ENCODE measurements at regions of chr6 and their contacts with region 1.

Region 1: GRCh38 chr6:13487122-13488014 is at the start of gene GFOD1:
- DNase-seq: peak; percentile 70 to 98 (median 86)

Region 2: GRCh38 chr6:13146442-13146841 is 340.9 kb before region 1 on chr6:
- intact Hi-C with region 1: no loop called
- DNase-seq: no peak

Region 3: DNA sequence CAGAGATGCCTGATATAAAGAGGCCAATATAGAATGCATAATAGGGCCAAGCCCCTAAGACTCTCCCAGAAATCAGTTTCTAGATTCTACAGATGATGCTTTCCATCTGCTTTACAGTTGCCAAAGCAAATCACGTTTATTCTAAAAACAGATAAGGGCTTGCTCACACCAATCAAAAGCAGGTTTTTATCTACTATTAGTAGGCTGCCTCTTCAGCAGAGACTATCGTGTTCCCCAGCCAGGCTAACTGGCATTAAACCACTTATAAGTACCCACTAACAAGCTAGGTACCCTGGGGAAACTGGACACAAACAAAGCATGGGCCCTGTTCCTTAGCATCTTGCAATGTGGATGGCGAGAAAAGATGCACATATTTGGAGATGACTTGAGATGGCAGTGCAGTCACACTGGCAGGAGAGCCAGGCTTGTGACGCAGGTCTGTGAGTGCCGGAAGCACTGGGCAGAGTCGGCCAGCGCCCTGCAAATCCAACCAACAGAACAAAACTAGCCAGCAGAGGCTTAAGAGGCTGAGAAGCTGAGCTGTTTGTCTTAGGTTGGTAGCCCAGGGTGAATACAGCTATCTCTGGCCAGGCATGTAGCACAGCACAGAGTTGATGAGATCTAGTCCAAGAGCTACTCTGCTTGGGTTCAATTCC is 73.3 kb before region 1 on chr6:
- intact Hi-C with region 1: loop called (anchors 5 kb)
- DNase-seq: peak in 9 of 10 donors; percentile 53 to 96 (median 84)

Region 4: DNA sequence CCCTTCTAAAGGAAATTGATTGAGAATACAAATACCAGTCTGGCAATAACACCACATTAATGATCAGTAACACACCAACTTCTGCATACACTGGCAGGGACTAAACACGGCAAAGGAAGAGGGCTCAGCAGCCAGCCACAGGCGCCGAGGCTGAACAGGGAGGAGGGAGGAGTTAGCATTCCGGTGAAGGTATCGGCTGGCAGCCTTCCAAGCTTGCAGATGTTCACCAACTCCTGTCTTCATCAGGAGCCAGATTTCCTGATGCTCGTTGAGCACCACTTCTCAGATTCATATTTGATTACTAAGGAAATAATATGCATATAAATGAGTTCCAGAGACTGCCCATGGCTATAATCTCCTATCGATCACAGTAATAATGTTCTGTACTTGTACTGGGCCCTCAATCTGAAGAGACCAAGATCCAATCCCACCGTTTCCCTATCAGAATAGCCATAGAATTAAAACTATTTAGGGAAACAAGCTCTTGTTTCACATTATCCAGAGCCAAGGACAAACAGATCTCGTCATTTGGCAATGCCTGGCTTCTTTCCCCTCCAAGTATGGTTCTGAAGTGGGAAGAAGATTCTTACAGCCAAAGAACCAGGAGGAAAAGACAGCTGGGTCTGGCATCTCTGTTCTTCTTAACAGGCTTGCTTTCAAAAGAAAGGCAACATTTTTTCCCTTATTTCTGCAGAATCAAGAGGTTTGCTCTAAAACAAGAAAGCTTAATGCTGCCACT is 42.2 kb before region 1 on chr6:
- intact Hi-C with region 1: no loop called
- DNase-seq: peak in 8 of 10 donors; percentile 43 to 95 (median 73)

Region 5: GRCh38 chr6:13574149-13574570 is 86.8 kb after region 1 on chr6:
- intact Hi-C with region 1: loop called (anchors 1 kb)
- DNase-seq: peak; percentile 78 to 98 (median 85)

Region 6: DNA sequence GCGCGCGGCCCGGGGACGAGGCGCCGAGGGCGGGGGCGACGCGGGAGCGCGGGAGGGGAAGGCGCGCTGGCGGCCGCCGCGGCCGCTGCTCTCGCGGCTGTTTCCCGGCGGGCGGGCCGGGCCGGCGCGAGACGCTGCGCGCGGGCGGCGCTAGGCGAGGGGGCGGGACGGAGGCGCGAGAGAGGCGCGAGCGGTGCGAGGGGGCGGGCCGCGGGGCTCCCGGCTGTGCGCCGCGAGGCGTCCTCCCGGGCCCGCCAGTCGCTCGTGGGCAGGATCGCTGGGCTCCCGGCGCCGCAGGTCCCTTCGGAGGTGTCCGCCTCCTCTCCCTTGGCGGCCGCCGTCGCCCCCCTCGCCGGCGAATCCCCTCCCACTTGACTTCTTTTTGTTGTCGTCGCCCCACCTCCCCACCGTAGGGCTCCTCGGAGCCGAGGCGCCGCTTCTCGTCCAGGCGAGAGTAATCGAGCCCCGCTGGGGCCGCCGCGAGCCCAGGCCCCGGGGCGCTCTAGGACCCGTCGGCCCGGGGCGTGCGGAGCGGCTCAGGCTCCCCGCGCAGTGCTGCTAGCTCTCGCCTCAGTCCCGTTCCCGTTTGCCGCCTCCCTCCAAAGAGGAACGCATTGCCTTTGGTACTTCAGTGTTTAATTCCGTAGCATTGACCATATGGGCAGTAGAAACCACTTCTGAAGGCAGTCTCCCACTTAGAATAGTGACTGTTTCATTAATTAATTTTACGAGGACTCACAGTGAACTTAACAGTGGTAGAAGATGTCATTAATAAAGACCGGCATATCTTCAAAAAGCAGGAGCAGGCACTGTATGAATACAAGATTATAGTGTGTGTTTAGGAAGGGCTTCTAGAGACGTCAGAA is 224.6 kb after region 1 on chr6 and contains the start of gene RANBP9:
- intact Hi-C with region 1: loop called (anchors 2 kb)
- DNase-seq: peak; percentile 70 to 97 (median 84)

Region 7: DNA sequence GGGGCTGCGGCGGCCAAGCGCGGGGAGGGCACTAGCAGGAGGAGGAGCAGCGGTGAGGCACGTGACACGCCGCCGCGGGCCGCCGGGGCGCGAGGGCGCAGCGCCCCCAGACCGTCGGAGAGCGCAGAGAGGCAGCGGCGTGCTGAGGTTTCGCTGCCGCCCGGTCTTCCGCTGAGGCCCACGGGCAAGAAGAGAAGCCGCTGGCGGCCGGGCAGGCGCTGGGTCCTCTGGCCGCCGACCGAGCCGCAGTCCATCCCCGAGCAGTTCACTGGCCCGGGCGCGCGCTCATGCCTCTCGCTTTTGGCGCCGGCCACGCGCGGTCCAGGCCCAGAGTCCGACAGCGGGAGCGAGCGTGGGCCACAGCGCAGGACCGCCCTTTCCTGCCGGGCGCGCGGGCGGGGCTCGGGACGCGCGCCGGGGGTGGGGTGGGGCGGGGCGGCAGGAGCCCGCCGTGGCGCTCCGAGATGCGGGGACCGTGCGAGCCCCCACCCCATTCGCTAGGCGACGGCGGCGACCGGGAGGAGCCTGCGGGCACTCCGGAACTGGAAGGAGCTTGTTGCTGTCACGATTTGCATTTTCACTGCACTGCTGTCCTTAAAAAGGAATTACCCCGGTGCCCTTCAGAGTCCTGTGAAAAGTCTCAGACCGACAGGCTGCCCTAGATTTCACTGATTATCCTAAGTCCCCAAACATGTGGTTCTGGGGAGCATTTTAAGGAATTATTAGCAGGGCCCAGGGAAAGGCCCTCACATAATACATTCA is 327.0 kb after region 1 on chr6 and contains the start of gene MCUR1:
- intact Hi-C with region 1: loop called (anchors 10 kb)
- DNase-seq: peak; percentile 69 to 98 (median 83)